Ascending aorta (tissue), 2 donors: ENCODE measurements at regions of chr2 and their contacts with region 1.

Region 1: GRCh38 chr2:33521791-33522281 is 45.4 kb downstream of the RASGRP3 start:
- DNase-seq: peak in 1 of 2 donors; percentile 71
- H3K4me3 ChIP-seq: no peak overlapping the region
- H3K27ac ChIP-seq: no peak overlapping the region
- H3K4me1 ChIP-seq: peaks cover 0 to 7% of the 10 kb centered on the region in 2 donors
- H3K27me3 ChIP-seq: no peaks in the 10 kb centered on the region
- CTCF ChIP-seq: no peak

Region 2: GRCh38 chr2:33475224-33476130 is 46.4 kb before region 1 on chr2:
- intact Hi-C with region 1: loop called (anchors 5 kb)
- DNase-seq: peak in 1 of 2 donors; percentile 88
- H3K4me3 ChIP-seq: peak overlapping the region; percentile 56 to 71
- H3K27ac ChIP-seq: peak overlapping the region; percentile 79
- H3K4me1 ChIP-seq: peaks cover 0 to 5% of the 10 kb centered on the region in 2 donors
- H3K27me3 ChIP-seq: no peaks in the 10 kb centered on the region
- CTCF ChIP-seq: peak; percentile 78 to 88 (median 79)

Region 3: GRCh38 chr2:33570681-33571080 is 48.8 kb after region 1 on chr2:
- intact Hi-C with region 1: no loop called
- DNase-seq: no peak
- H3K4me3 ChIP-seq: no peak overlapping the region
- H3K27ac ChIP-seq: no peak overlapping the region
- H3K4me1 ChIP-seq: no peaks in the 10 kb centered on the region
- H3K27me3 ChIP-seq: no peaks in the 10 kb centered on the region
- CTCF ChIP-seq: no peak